ENCODE measurements at regions of chr9 and their contacts with region 1.

Region 1: DNA sequence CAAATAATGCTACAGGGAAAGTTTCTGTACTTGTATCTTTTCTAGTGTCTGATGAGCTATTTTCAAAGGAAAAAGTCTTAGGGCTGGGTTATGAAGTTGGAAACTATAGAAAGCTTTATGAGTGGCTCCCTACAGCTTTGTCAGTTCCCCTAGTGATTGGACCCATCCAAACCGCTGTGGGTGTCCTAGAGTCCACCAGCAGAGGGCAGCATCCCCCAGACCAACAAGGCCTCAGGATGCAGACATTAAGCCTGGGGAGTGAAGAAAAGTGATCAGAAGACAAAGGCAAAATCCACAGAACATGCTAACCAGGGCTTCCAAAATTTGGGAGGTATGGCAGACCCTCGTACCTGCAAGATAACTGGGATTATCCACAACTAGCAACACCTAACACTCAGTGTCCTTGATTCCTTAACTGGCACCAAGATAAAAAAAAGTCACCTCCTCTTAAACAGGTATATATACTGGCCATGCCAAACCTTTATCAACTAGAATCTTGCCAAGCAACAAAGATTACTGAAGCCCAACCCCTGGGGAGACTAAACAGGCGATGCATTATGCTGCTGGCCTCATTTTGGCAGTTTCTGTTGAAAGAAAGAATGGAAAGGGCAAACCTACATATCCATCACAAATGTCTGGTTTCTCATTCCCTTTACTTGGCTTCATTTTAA is 110.4 kb upstream of the NR5A1 start:
- DNase-seq: peak; percentile 48
- H3K4me3 ChIP-seq: no peak overlapping the region
- H3K27ac ChIP-seq: no peak overlapping the region
- H3K27me3 ChIP-seq: peaks cover 4% of the 10 kb centered on the region
- CTCF ChIP-seq: peak; percentile 98

Region 2: DNA sequence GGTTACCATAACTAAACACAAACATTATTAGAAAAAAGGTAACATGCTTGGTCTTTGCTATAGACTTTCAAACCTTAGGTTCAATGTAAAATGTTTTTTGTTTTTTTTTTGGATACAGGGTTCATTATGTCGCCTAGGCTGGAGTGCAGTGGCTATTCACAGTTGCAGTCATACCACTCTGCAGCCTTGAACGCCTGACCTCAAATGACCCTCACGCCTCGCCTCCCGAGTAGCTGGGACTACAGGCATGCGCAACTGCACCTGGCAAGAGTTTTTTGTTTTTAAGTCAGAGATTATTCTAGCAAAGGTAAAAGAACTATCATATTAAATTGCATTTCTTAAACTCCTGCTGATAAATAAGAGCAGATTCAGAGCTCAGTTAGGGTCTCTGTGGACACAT is 55.3 kb before region 1 on chr9:
- CTCF ChIA-PET with region 1: interaction called, 26 read pairs
- POLR2A ChIA-PET with region 1: no interaction called
- DNase-seq: no peak
- H3K4me3 ChIP-seq: no peak overlapping the region
- H3K27ac ChIP-seq: no peak overlapping the region
- H3K27me3 ChIP-seq: no peaks in the 10 kb centered on the region
- CTCF ChIP-seq: no peak

Region 3: DNA sequence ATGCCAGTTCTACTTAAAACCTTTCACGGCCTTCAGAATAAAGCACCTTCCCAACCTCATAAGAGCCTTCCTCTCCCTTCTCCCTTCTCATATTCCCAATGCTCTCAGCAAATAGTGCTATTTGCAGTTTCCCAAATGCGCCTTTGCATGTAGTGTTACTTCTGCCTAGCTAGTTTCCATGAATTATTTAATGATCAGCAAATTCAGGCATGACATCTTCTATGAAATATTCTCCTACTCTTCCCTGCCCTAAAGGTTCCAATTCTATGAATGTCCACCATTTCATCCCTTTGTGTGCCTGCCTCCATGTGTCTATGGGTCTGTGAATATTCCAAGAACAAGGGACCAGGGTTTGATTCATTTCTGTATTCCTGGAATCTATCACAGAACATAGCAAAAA is 11.6 kb before region 1 on chr9:
- CTCF ChIA-PET with region 1: interaction called, 28 read pairs
- POLR2A ChIA-PET with region 1: no interaction called
- DNase-seq: no peak
- H3K4me3 ChIP-seq: no peak overlapping the region
- H3K27ac ChIP-seq: no peak overlapping the region
- H3K27me3 ChIP-seq: peaks cover 15% of the 10 kb centered on the region
- CTCF ChIP-seq: no peak

Region 4: DNA sequence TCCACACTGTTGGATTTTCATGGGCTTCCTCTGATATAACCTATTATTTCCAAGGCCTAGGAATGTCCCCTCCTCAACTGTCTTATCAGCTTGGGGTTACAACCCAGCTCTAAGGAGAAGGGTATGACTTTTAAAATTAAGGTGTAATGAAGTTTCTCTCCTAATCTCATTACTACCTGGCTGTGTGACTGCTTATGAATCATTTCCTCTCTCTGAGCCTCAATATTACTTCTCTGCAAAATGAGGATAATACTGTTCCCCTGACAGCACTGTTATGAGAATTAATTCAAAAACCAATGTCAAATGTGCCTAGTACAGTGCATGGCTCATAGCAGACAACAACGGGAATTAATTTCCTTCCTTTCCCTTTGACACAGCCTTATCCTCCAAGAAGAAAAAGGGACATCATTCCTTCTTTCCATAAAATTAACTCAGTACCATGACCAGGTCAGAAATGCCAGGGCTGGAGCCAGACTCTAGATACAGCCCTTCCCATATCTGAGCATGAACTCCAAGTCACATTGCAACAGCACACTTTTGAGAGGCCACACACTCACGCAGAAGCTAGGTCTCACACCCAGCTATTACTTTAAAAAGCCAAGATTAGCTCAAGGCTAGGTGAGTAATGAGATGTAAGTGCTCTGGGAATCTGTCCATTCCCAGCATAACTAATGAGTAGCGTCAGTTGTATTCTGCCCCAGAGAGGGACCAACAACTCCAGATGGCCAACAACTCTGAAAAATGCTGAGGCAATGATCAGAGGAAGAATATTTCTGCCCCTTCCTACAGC is 34.8 kb after region 1 on chr9:
- CTCF ChIA-PET with region 1: interaction called, 21 read pairs
- POLR2A ChIA-PET with region 1: no interaction called
- DNase-seq: peak; percentile 44
- H3K4me3 ChIP-seq: no peak overlapping the region
- H3K27ac ChIP-seq: no peak overlapping the region
- H3K27me3 ChIP-seq: no peaks in the 10 kb centered on the region
- CTCF ChIP-seq: no peak

Region 5: GRCh38 chr9:124697326-124698200 is 80.0 kb after region 1 on chr9:
- CTCF ChIA-PET with region 1: interaction called, 22 read pairs
- POLR2A ChIA-PET with region 1: no interaction called
- DNase-seq: no peak
- H3K4me3 ChIP-seq: no peak overlapping the region
- H3K27ac ChIP-seq: peak overlapping the region; percentile 54
- H3K27me3 ChIP-seq: no peaks in the 10 kb centered on the region
- CTCF ChIP-seq: no peak

Region 6: GRCh38 chr9:124743686-124744348 is 126.2 kb after region 1 on chr9:
- CTCF ChIA-PET with region 1: interaction called, 80 read pairs
- POLR2A ChIA-PET with region 1: no interaction called
- DNase-seq: no peak
- H3K4me3 ChIP-seq: no peak overlapping the region
- H3K27ac ChIP-seq: peak overlapping the region; percentile 12
- H3K27me3 ChIP-seq: no peaks in the 10 kb centered on the region
- CTCF ChIP-seq: no peak

Measured in AG04450 (cell line).